Pancreas (tissue), 10 donors: ENCODE measurements at regions of chr13 and their contacts with region 1.

Region 1: GRCh38 chr13:110593430-110594130 is 21.8 kb upstream of the NAXD start:
- DNase-seq: peak in 1 of 6 donors; percentile 37
- ATAC-seq: peak; percentile 91 to 98 (median 96)
- H3K4me3 ChIP-seq: no peak overlapping the region
- H3K27ac ChIP-seq: no peak overlapping the region
- H3K4me1 ChIP-seq: no peaks in the 10 kb centered on the region
- H3K27me3 ChIP-seq: no peaks in the 10 kb centered on the region
- CTCF ChIP-seq: peak; percentile 34 to 54 (median 41)

Region 2: GRCh38 chr13:110216398-110217041 is 377.1 kb before region 1 on chr13:
- intact Hi-C with region 1: no loop called
- DNase-seq: no peak
- ATAC-seq: peak in 3 of 4 donors; percentile 36 to 64 (median 52)
- H3K4me3 ChIP-seq: no peak overlapping the region
- H3K27ac ChIP-seq: no peak overlapping the region
- H3K4me1 ChIP-seq: no peaks in the 10 kb centered on the region
- H3K27me3 ChIP-seq: no peaks in the 10 kb centered on the region
- CTCF ChIP-seq: no peak

Region 3: GRCh38 chr13:110819203-110820014 is 225.8 kb after region 1 on chr13:
- intact Hi-C with region 1: loop called in 2 of 3 experiments (anchors 5 to 10 kb)
- DNase-seq: peak; percentile 52 to 90 (median 79)
- ATAC-seq: peak; percentile 96 to 100 (median 98)
- H3K4me3 ChIP-seq: no peak overlapping the region
- H3K27ac ChIP-seq: no peak overlapping the region
- H3K4me1 ChIP-seq: no peaks in the 10 kb centered on the region
- H3K27me3 ChIP-seq: no peaks in the 10 kb centered on the region
- CTCF ChIP-seq: peak; percentile 96 to 98 (median 98)